ENCODE measurements at regions of chr6 and their contacts with region 1.

Region 1: GRCh38 chr6:35620706-35621105 is 68.0 kb downstream of the FKBP5 start:
- DNase-seq: no peak
- H3K4me3 ChIP-seq: no peak overlapping the region
- H3K27ac ChIP-seq: no peak overlapping the region
- H3K4me1 ChIP-seq: peaks cover 9% of the 10 kb centered on the region
- H3K27me3 ChIP-seq: no peaks in the 10 kb centered on the region
- CTCF ChIP-seq: no peak
- EP300 ChIP-seq: no peak
- POLR2A ChIP-seq: no peak

Region 2: DNA sequence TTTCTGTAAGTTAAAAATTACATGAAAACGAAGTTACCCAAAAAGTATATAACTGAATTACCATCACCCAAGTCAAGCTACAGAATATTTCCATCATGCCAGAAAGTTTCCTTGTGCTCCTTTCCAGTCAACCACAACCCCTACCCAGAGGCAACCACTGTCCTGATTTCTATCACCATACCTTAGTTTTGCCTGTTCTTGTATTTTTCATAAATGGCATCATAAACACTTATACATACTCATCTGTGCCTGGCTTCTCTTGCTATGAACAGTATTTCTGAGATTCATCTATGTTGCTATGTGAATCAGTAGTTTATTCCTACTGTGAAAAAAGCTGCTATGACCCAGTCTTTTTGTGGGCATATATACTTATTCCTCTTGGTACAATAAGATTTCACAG is 60.6 kb after region 1 on chr6:
- intact Hi-C with region 1: loop called in 1 of 4 experiments (anchors 2 kb)
- DNase-seq: no peak
- H3K4me3 ChIP-seq: no peak overlapping the region
- H3K27ac ChIP-seq: peak overlapping the region in 1 of 2 donors; percentile 2
- H3K4me1 ChIP-seq: peaks cover 13% of the 10 kb centered on the region
- H3K27me3 ChIP-seq: no peaks in the 10 kb centered on the region
- CTCF ChIP-seq: no peak
- EP300 ChIP-seq: no peak
- POLR2A ChIP-seq: no peak

Region 3: GRCh38 chr6:35786810-35787209 is 166.1 kb after region 1 on chr6:
- intact Hi-C with region 1: no loop called
- DNase-seq: no peak
- H3K4me3 ChIP-seq: no peak overlapping the region
- H3K27ac ChIP-seq: no peak overlapping the region
- H3K4me1 ChIP-seq: no peaks in the 10 kb centered on the region
- H3K27me3 ChIP-seq: no peaks in the 10 kb centered on the region
- CTCF ChIP-seq: no peak
- EP300 ChIP-seq: no peak
- POLR2A ChIP-seq: no peak

Region 4: DNA sequence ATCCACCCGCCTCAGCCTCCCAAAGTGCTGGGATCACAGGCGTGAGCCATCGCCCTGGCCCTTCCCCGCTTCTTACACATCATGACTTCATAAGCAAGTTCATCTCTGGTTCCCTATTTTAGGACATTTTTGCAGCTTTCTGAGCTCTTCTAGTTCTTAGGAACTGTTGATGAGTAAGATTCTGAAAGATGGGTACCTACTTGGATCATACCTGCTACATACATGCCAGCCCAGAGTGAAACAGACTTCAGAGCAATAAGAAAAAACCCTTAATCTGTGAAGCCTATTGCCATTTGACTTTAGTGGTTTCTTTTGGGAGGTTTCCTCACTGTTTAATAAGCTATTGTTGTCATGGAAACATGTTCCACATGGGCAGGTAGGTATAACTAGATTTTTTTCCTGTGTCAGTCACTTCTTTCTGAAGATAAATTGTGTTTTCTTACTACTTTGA is 1665.2 kb after region 1 on chr6:
- intact Hi-C with region 1: no loop called
- DNase-seq: no peak
- H3K4me3 ChIP-seq: no peak overlapping the region
- H3K27ac ChIP-seq: no peak overlapping the region
- H3K4me1 ChIP-seq: peaks cover 7% of the 10 kb centered on the region
- H3K27me3 ChIP-seq: no peaks in the 10 kb centered on the region
- CTCF ChIP-seq: no peak
- EP300 ChIP-seq: no peak
- POLR2A ChIP-seq: no peak